ENCODE measurements at regions of chr20 and their contacts with region 1.

Region 1: DNA sequence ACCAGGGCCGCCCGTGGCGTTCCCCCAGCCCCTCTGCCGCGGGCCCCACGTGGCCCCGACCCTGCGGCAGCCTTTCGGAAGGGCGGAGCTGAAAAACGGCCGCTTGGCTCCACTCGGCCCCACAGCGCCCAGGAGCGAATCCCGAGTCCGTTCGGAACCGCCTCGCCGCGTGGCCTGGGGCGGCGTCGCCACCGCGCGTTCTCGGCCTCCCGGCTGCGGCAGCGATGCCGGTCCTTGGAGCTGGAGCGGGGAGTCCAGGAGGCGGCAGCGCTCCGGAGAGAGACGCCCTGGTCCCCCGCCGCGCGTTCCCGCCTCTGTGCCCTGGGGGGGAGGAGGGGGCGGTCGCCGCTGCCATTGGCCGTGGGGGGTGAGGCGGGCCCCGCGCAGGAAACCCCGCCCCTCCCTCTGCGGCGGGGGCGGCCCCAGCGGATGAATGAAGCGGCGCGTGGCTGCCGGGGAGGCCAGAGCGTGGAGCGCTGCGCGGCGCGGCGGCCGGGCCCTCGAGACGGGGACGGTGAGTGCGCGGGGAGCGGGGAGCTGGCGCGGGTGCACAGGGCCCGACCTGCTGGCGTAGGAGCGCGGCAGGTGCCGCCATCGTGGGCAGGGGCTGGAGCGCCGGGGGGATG is at the start of gene SLCO4A1:
- DNase-seq: peak; percentile 70 to 86
- ATAC-seq: peak; percentile 86 to 92 (median 88)
- H3K4me3 ChIP-seq: peak within 1 kb of the TSS; percentile 55 to 72 (median 66)
- H3K27ac ChIP-seq: peak within 1 kb of the TSS; percentile 64 to 90 (median 75)
- H3K4me1 ChIP-seq: peaks cover 12 to 56% (median 43%) of the 10 kb centered on the region in 9 donors
- H3K27me3 ChIP-seq: peaks cover 0 to 59% (median 20%) of the 10 kb centered on the region in 7 donors
- CTCF ChIP-seq: peak in 3 of 9 donors; percentile 6 to 35 (median 22)
- total RNA-seq, gene SLCO4A1: 1.5 to 34.3 (median 4.9) TPM

Region 2: DNA sequence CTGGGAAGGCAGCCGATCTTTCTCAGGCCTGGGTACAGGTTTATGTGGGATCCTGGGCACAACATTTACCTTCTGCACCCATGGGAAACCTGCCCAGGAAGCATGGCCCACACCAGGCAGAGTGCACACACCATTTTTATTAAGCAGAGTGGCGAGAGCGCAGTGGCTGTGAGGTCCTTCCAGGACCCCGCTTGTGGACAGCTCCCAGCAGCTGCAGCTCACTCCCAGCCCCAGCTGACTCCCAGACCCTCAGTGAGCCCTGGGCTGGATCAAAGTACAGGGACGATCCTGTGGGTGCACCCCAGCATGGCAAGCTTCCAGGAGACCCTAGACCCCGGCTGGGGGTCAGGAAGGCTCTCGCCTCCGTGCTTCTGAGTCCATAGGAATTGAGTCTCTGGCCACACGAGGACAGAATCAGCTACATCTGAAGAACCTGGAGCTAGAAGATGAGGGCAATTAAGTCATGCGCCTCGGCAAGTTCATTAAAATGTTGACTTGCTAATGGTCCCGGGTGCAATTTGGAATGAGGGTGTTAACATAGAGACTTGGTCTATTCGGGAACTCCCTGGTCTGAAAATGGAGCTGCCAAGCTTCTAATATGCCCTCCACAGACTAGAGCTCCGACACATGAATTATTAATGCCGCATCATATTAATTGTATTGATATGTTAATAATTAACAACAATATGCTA is 65.2 kb before region 1 on chr20:
- intact Hi-C with region 1: no loop called
- DNase-seq: no peak
- ATAC-seq: peak in 7 of 8 donors; percentile 14 to 50 (median 37)
- H3K4me3 ChIP-seq: no peak overlapping the region
- H3K27ac ChIP-seq: no peak overlapping the region
- H3K4me1 ChIP-seq: peaks cover 0 to 42% (median 4%) of the 10 kb centered on the region in 9 donors
- H3K27me3 ChIP-seq: peaks cover 0 to 70% (median 56%) of the 10 kb centered on the region in 7 donors
- CTCF ChIP-seq: no peak

Region 3: GRCh38 chr20:63145166-63145565 is 503.0 kb after region 1 on chr20:
- intact Hi-C with region 1: loop called in 1 of 10 experiments (anchors 10 kb)
- DNase-seq: no peak
- ATAC-seq: no peak
- H3K4me3 ChIP-seq: no peak overlapping the region
- H3K27ac ChIP-seq: no peak overlapping the region
- H3K4me1 ChIP-seq: peaks cover 0 to 4% (median 0%) of the 10 kb centered on the region in 9 donors
- H3K27me3 ChIP-seq: peaks cover 0 to 57% (median 32%) of the 10 kb centered on the region in 7 donors
- CTCF ChIP-seq: no peak

Measured in heart right ventricle (tissue), 16 donors.